Panc1 (cell line): ENCODE measurements at regions of chr9 and their contacts with region 1.

Region 1: DNA sequence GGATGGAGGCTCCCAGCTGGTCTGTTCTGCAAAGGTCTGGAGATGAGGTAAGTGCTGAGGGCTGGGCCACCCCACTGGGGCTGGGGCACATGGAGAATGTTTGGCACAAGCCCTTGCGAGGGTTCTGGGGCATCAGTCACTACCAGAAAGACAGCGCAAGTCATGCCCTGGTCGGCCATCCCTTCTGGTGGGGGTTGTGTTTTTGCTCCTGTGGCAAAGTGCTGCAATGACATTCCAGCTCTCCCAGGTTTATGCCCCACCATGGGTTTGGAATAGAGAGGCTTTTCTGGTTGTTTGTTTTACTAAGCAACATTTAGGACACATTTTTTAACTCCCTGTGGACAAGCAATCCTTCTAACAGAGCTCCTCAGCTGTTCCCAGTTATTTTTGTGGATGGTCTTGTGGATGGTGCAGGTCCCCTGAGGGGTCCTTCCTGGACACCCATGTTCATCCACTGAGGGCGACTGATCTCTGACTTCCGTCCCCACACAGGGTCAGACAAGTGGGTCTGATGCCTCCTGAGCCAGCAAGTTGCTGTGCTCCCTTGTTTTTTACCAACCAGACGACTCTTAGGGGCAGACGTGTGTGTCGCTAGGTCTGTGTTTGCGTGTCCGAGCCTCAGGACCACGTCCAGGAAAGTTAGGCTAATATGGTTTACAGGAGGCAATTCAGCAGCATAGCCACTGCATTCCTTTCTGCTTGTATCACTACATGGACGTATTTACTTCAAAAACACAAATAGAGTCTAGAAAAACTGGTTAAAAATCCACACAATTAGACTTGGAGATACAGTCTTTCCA is 64.9 kb upstream of the ECM2 start:
- DNase-seq: no peak
- ATAC-seq: no peak
- H3K4me3 ChIP-seq: no peak overlapping the region
- H3K27ac ChIP-seq: no peak overlapping the region
- H3K4me1 ChIP-seq: peaks cover 15% of the 10 kb centered on the region
- H3K27me3 ChIP-seq: no peaks in the 10 kb centered on the region
- CTCF ChIP-seq: no peak

Region 2: DNA sequence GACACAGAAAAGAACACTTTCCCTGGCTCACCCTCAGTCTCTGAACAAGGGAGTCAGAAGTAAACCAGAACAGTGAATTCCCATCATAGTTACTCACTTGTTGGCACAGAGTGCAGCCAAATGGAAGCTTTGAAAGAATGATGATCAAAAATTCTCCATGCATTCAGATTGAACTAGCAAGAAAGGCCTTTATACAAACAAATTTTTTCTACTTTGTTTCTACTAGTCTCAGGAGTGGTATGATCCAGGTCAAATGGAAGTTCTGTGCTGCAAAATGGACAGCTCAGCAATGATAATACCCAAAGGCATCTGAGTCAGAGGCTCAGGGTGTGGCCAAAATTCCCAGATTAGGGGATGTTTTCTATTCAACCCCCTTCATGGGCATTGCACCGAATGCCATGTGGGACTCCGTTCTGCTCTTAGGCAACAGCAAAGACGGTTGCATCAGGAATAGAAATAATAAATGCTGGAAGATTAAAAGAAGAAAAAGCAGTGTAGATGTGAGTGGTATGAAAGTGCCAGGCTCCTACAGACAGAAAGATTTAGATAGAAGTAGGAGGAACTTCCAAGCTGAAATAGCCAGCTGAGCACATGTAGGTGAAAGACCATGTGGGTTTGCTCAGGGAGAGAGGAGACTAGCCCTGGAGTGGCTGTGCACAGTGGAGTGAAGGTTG is 94.3 kb before region 1 on chr9:
- CTCF ChIA-PET with region 1: no interaction called
- POLR2A ChIA-PET with region 1: no interaction called
- in situ Hi-C with region 1: no loop called
- intact Hi-C with region 1: no loop called
- DNase-seq: no peak
- ATAC-seq: no peak
- H3K4me3 ChIP-seq: no peak overlapping the region
- H3K27ac ChIP-seq: no peak overlapping the region
- H3K4me1 ChIP-seq: no peaks in the 10 kb centered on the region
- H3K27me3 ChIP-seq: no peaks in the 10 kb centered on the region
- CTCF ChIP-seq: no peak

Region 3: GRCh38 chr9:92538541-92538940 is 62.1 kb before region 1 on chr9:
- CTCF ChIA-PET with region 1: no interaction called
- POLR2A ChIA-PET with region 1: interaction called, 12 read pairs
- in situ Hi-C with region 1: no loop called
- intact Hi-C with region 1: no loop called
- DNase-seq: no peak
- ATAC-seq: no peak
- H3K4me3 ChIP-seq: no peak overlapping the region
- H3K27ac ChIP-seq: no peak overlapping the region
- H3K4me1 ChIP-seq: no peaks in the 10 kb centered on the region
- H3K27me3 ChIP-seq: no peaks in the 10 kb centered on the region
- CTCF ChIP-seq: no peak

Region 4: GRCh38 chr9:92634712-92635605 is 34.3 kb after region 1 on chr9:
- CTCF ChIA-PET with region 1: interaction called, 10 read pairs
- POLR2A ChIA-PET with region 1: no interaction called
- in situ Hi-C with region 1: no loop called
- intact Hi-C with region 1: no loop called
- DNase-seq: peak; percentile 64
- ATAC-seq: peak; percentile 95
- H3K4me3 ChIP-seq: no peak overlapping the region
- H3K27ac ChIP-seq: no peak overlapping the region
- H3K4me1 ChIP-seq: no peaks in the 10 kb centered on the region
- H3K27me3 ChIP-seq: no peaks in the 10 kb centered on the region
- CTCF ChIP-seq: peak; percentile 90

Region 5: GRCh38 chr9:93846349-93846748 is 1245.7 kb after region 1 on chr9:
- CTCF ChIA-PET with region 1: no interaction called
- POLR2A ChIA-PET with region 1: interaction called, 14 read pairs
- in situ Hi-C with region 1: no loop called
- intact Hi-C with region 1: no loop called
- DNase-seq: no peak
- ATAC-seq: no peak
- H3K4me3 ChIP-seq: no peak overlapping the region
- H3K27ac ChIP-seq: no peak overlapping the region
- H3K4me1 ChIP-seq: no peaks in the 10 kb centered on the region
- H3K27me3 ChIP-seq: peaks cover 2% of the 10 kb centered on the region; the same call in 1 of the 2 replicates
- CTCF ChIP-seq: no peak